Body of pancreas (tissue), 4 donors: ENCODE measurements at regions of chr11 and their contacts with region 1.

Region 1: GRCh38 chr11:9314291-9315036 is at the start of gene TMEM41B:
- DNase-seq: peak; percentile 97 to 99 (median 99)
- ATAC-seq: peak; percentile 98
- H3K4me3 ChIP-seq: peak within 1 kb of the TSS; percentile 84 to 94
- H3K27ac ChIP-seq: peak within 1 kb of the TSS; percentile 82 to 95 (median 89)
- H3K4me1 ChIP-seq: peaks cover 24% of the 10 kb centered on the region
- H3K27me3 ChIP-seq: no peaks in the 10 kb centered on the region
- CTCF ChIP-seq: peak in 1 of 7 experiments; percentile 19
- POLR2A ChIP-seq: peak; percentile 64 to 92 (median 84)
- total RNA-seq, gene TMEM41B: 25.4 to 35.9 TPM

Region 2: DNA sequence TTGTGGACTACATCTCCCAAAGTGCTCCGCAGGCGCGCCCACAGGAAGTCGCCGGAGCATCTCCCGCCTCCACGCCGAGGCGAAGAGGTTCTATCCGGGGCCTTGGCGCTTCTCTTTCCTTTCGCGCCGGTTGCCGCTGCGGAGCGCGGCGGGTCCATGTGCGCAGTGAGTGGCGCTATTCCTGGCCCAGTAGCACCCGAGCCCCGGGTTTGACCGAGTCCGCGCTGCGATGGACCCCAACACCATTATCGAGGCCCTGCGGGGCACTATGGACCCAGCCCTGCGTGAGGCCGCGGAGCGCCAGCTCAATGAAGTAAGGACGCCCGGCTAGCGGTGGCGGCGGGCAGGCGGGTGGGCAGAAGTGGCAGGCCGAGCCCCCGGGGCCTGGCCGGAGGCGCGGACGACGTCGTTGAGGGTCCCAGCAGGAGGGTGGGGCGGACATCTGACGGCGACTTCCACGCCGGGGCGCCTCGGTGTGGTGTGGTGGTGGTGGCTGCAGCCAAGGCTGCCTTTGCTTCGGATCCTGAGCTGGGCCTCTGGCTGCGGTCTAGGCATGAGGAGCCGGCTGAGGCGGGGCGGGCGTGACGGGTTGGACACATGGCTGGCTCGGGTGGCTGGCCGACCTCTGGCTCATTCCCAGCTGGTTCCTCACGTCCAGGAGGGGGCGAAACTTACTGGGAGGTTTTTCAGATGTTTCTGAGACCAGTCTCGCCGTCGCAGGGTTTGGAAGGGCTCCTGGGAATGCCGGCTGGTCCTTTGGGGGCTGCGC is 70.3 kb after region 1 on chr11 and contains the start of gene IPO7:
- intact Hi-C with region 1: loop called (anchors 10 kb)
- DNase-seq: peak; percentile 89 to 92 (median 90)
- ATAC-seq: peak; percentile 94
- H3K4me3 ChIP-seq: peak within 1 kb of the TSS; percentile 43 to 63
- H3K27ac ChIP-seq: peak within 1 kb of the TSS; percentile 87 to 96 (median 94)
- H3K4me1 ChIP-seq: peaks cover 21% of the 10 kb centered on the region
- H3K27me3 ChIP-seq: no peaks in the 10 kb centered on the region
- CTCF ChIP-seq: peak in 3 of 7 experiments; percentile 29 to 36 (median 32)
- POLR2A ChIP-seq: peak; percentile 73 to 89 (median 88)
- total RNA-seq, gene IPO7: 54.0 to 167 TPM